ENCODE measurements at regions of chr9 and their contacts with region 1.

Region 1: GRCh38 chr9:100028201-100028784 is 70.5 kb downstream of the ERP44 start:
- DNase-seq: peak; percentile 77
- H3K4me3 Mint-ChIP-seq: no peak overlapping the region
- H3K27ac Mint-ChIP-seq: no peak overlapping the region
- H3K4me1 Mint-ChIP-seq: no peaks in the 10 kb centered on the region
- H3K27me3 Mint-ChIP-seq: no peaks in the 10 kb centered on the region
- CTCF ChIP-seq: peak; percentile 85

Region 2: GRCh38 chr9:100011062-100011681 is 17.1 kb before region 1 on chr9:
- CTCF ChIA-PET with region 1: interaction called, 15 read pairs
- POLR2A ChIA-PET with region 1: no interaction called
- intact Hi-C with region 1: no loop called
- DNase-seq: peak; percentile 60
- H3K4me3 Mint-ChIP-seq: no peak overlapping the region
- H3K27ac Mint-ChIP-seq: no peak overlapping the region
- H3K4me1 Mint-ChIP-seq: no peaks in the 10 kb centered on the region
- H3K27me3 Mint-ChIP-seq: no peaks in the 10 kb centered on the region
- CTCF ChIP-seq: peak; percentile 62

Region 3: DNA sequence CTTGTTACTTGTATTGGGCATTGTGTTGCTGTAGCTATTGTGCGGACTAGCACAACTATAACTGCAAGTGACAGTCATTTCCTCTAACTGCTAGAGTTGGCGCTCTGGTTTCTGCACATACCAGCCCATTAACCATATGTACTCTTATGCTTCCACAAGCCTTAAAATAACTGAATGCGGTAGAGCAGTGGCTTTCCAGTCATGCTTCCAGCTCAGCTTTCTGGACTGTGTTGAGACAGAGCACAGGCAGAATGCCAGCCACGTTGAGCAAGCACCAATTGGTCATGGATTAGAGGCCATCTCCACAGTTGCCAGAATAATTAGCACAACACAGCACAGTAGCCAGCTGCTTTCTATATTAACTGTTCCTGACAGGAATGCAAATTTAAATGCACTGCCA is 82.9 kb after region 1 on chr9:
- CTCF ChIA-PET with region 1: interaction called, 10 read pairs
- POLR2A ChIA-PET with region 1: no interaction called
- intact Hi-C with region 1: loop called (anchors 2 kb)
- DNase-seq: peak; percentile 97
- H3K4me3 Mint-ChIP-seq: peak overlapping the region; percentile 28
- H3K27ac Mint-ChIP-seq: no peak overlapping the region
- H3K4me1 Mint-ChIP-seq: peaks cover 19% of the 10 kb centered on the region
- H3K27me3 Mint-ChIP-seq: no peaks in the 10 kb centered on the region
- CTCF ChIP-seq: no peak

Region 4: GRCh38 chr9:100222674-100223073 is 194.4 kb after region 1 on chr9:
- CTCF ChIA-PET with region 1: interaction called, 17 read pairs
- POLR2A ChIA-PET with region 1: interaction called, 3 read pairs
- intact Hi-C with region 1: loop called (anchors 1 kb)
- DNase-seq: peak; percentile 33
- H3K4me3 Mint-ChIP-seq: no peak overlapping the region
- H3K27ac Mint-ChIP-seq: no peak overlapping the region
- H3K4me1 Mint-ChIP-seq: no peaks in the 10 kb centered on the region
- H3K27me3 Mint-ChIP-seq: no peaks in the 10 kb centered on the region
- CTCF ChIP-seq: peak; percentile 48